CD4-positive, alpha-beta T cell (primary cell): ENCODE measurements at regions of chr7 and their contacts with region 1.

Region 1: DNA sequence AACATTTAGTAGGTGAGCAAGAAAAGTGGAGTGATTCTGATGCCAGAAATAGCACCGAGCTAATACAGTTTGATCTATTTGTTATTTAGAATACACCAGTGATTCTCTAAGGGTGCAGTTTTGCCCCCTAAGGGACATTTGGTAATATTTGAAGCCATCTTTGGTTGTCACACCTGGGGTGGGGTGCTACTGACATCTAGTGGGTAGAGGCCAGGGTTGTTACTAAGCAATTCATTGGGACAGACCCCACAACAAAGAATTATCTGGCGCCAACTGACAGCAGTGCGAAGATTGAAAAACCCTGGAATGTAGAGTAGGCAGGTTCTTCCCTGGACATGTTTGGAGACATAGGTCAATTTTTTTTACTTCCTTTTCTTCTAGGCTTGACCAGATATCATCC is 14.6 kb downstream of the PALS2 start:
- DNase-seq: peak; percentile 27 to 78 (median 50)
- ATAC-seq: peak; percentile 84
- H3K4me3 ChIP-seq: no peak overlapping the region
- H3K4me3 Mint-ChIP-seq: no peak overlapping the region
- H3K27ac ChIP-seq: no peak overlapping the region
- H3K27ac Mint-ChIP-seq: no peak overlapping the region
- H3K4me1 ChIP-seq: no peaks in the 10 kb centered on the region
- H3K4me1 Mint-ChIP-seq: peaks cover 15% of the 10 kb centered on the region
- H3K27me3 ChIP-seq: no peaks in the 10 kb centered on the region
- H3K27me3 Mint-ChIP-seq: no peaks in the 10 kb centered on the region
- CTCF ChIP-seq: peak; percentile 78

Region 2: GRCh38 chr7:23570592-23571200 is 1017.2 kb before region 1 on chr7:
- CTCF ChIA-PET with region 1: no interaction called
- POLR2A ChIA-PET with region 1: no interaction called
- intact Hi-C with region 1: loop called in 1 of 2 experiments (anchors 5 kb)
- DNase-seq: peak; percentile 48 to 83 (median 59)
- ATAC-seq: peak; percentile 81
- H3K4me3 ChIP-seq: no peak overlapping the region
- H3K4me3 Mint-ChIP-seq: no peak overlapping the region
- H3K27ac ChIP-seq: no peak overlapping the region
- H3K27ac Mint-ChIP-seq: no peak overlapping the region
- H3K4me1 ChIP-seq: peaks cover 4% of the 10 kb centered on the region
- H3K4me1 Mint-ChIP-seq: no peaks in the 10 kb centered on the region
- H3K27me3 ChIP-seq: peaks cover 0 to 2% of the 10 kb centered on the region in 2 experiments
- H3K27me3 Mint-ChIP-seq: peaks cover 16% of the 10 kb centered on the region
- CTCF ChIP-seq: peak; percentile 79

Region 3: DNA sequence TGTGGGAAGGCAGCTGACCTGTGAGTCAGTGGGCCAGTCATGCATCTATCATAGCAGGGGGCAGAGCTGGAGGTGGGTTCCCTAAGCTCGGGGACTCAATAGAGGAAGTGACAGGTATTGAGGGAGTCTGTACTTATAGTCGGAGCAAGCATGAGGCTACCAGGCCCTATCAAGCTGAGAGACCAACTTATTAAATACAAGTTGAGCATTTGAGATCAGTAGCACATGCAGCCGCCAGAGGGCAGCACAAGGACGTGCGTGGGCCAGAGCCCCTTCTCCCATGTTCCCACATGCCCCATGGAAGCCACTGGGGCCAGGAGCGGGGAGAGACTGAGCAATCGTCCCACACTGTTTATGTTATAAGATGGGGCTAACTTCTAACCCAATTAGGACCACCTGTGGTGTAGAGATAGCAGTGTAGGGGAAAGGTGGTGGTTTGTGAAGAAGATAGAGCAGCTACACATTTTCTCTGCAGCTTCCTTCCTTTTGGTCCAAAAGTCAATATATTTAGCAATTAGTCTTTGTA is 890.9 kb before region 1 on chr7:
- CTCF ChIA-PET with region 1: no interaction called
- POLR2A ChIA-PET with region 1: no interaction called
- intact Hi-C with region 1: loop called in 1 of 2 experiments (anchors 5 kb)
- DNase-seq: peak; percentile 24 to 76 (median 45)
- ATAC-seq: peak; percentile 49
- H3K4me3 ChIP-seq: no peak overlapping the region
- H3K4me3 Mint-ChIP-seq: no peak overlapping the region
- H3K27ac ChIP-seq: no peak overlapping the region
- H3K27ac Mint-ChIP-seq: no peak overlapping the region
- H3K4me1 ChIP-seq: peaks cover 5% of the 10 kb centered on the region
- H3K4me1 Mint-ChIP-seq: no peaks in the 10 kb centered on the region
- H3K27me3 ChIP-seq: no peaks in the 10 kb centered on the region
- H3K27me3 Mint-ChIP-seq: no peaks in the 10 kb centered on the region
- CTCF ChIP-seq: peak; percentile 70

Region 4: DNA sequence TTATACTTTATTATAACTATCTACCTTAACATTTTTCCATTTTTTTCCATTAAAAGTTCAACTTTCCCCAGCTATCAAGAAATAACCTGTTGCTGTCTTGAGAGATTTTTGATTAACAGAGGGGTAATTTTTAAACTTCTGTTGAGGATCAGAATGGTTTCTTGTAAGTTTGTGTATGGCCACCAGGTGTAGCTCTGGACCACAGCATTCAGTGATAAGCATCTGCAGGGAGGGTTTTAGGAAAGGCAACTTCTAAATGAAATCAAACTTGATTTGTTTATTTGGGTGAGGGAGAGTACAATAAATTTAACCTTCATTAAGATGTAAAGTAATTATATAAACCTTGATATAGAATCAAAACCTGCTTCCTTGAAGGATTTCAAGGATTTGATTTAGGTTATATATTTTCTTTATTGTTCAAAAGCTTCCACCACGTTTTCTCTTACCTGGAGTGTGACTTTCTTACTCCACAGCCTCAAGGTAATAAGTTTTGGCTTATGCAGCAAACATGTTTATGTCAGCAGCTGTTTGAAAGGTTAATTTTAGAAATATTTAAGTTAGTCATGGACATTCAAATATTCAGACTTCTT is 724.5 kb before region 1 on chr7:
- CTCF ChIA-PET with region 1: no interaction called
- POLR2A ChIA-PET with region 1: no interaction called
- intact Hi-C with region 1: loop called in 1 of 2 experiments (anchors 5 kb)
- DNase-seq: peak in 4 of 14 experiments; percentile 8 to 45 (median 30)
- ATAC-seq: no peak
- H3K4me3 ChIP-seq: no peak overlapping the region
- H3K4me3 Mint-ChIP-seq: no peak overlapping the region
- H3K27ac ChIP-seq: no peak overlapping the region
- H3K27ac Mint-ChIP-seq: no peak overlapping the region
- H3K4me1 ChIP-seq: no peaks in the 10 kb centered on the region
- H3K4me1 Mint-ChIP-seq: no peaks in the 10 kb centered on the region
- H3K27me3 ChIP-seq: no peaks in the 10 kb centered on the region
- H3K27me3 Mint-ChIP-seq: no peaks in the 10 kb centered on the region
- CTCF ChIP-seq: no peak

Region 5: DNA sequence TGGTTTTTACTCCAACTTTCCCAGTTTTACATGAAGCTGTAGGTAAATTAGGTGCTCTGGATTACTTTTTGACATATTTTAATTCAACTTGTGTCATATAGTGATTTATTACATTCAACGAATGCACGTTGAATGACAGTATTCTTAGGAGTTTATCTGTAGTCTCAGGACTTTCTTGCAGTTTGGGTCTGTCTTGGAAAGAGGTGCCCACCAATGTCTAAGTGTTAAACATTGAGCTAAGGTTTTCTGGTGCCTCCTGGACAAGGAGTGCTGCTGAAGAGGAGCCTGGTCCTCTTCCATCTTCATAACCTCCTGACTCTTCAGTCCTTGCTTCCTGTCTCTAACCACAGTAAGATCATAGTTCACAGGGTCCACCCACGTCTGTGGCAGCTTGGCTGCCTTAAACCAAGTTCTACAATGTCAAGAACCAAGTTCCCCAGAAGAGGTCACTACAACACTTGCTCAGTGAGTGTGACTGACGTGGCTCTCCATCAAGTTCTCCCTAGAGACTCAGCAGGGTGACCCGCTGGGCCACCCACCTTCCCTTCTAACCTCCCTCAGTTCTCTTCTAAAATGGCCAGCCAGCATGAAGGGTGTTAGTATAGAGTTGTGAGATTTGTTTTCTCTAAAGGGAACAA is 297.7 kb before region 1 on chr7:
- CTCF ChIA-PET with region 1: no interaction called
- POLR2A ChIA-PET with region 1: no interaction called
- intact Hi-C with region 1: loop called (anchors 2 to 5 kb)
- DNase-seq: peak in 4 of 14 experiments; percentile 9 to 64 (median 56)
- ATAC-seq: peak; percentile 72
- H3K4me3 ChIP-seq: no peak overlapping the region
- H3K4me3 Mint-ChIP-seq: no peak overlapping the region
- H3K27ac ChIP-seq: no peak overlapping the region
- H3K27ac Mint-ChIP-seq: no peak overlapping the region
- H3K4me1 ChIP-seq: peaks cover 5% of the 10 kb centered on the region
- H3K4me1 Mint-ChIP-seq: peaks cover 12% of the 10 kb centered on the region
- H3K27me3 ChIP-seq: peaks cover 17 to 29% of the 10 kb centered on the region in 2 experiments
- H3K27me3 Mint-ChIP-seq: peaks cover 64% of the 10 kb centered on the region
- CTCF ChIP-seq: peak; percentile 14

Region 6: GRCh38 chr7:24401628-24402593 is 185.9 kb before region 1 on chr7:
- CTCF ChIA-PET with region 1: no interaction called
- POLR2A ChIA-PET with region 1: no interaction called
- intact Hi-C with region 1: loop called (anchors 1 to 2 kb)
- DNase-seq: peak in 3 of 14 experiments; percentile 22 to 50 (median 30)
- ATAC-seq: no peak
- H3K4me3 ChIP-seq: no peak overlapping the region
- H3K4me3 Mint-ChIP-seq: no peak overlapping the region
- H3K27ac ChIP-seq: no peak overlapping the region
- H3K27ac Mint-ChIP-seq: no peak overlapping the region
- H3K4me1 ChIP-seq: peaks cover 5% of the 10 kb centered on the region
- H3K4me1 Mint-ChIP-seq: peaks cover 13% of the 10 kb centered on the region
- H3K27me3 ChIP-seq: no peaks in the 10 kb centered on the region
- H3K27me3 Mint-ChIP-seq: no peaks in the 10 kb centered on the region
- CTCF ChIP-seq: peak; percentile 50